GM12878 (cell line): ENCODE measurements at regions of chr20 and their contacts with region 1.

Region 1: DNA sequence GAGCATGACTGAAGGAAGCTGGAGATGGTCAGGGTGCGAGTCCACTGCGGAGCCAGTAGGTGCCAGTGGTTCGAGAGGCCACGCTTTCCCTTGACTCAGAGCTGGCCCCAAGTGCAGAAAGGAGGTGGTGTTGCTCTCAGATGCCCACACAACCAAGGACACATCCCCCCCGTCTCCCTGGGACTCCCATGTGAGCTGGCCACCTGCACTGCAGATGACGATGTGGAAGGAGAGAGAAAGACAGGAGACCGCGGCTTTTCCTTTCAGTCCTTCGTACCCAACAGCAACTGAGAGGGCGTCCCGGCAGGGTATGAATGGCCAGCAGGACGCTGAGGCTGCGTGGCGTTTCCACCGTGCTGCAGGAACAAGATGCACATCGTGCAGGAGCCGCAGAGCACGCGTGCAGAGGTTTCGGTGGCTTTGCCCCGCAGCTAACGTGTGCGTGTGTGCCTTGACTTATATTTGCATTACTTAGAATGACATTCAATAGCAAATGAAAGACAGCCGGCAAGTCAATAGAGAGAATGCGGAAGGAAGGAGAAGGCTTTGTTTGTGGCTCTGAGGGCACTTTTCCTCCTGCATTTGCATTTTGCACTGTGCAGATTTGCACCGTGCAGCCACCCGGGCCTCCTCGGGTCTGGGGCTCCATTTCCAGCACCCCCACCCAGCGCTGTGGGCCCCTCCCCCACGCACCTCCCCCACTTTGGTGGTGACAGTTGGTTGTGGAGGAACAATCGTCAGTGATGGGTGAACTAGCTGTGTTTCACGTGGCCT is 26.3 kb upstream of the BHLHE23 start:
- DNase-seq: peak; percentile 38
- ATAC-seq: peak; percentile 82
- H3K4me3 ChIP-seq: no peak overlapping the region
- H3K27ac ChIP-seq: no peak overlapping the region
- H3K4me1 ChIP-seq: 0 out of 2 replicates have a peak, but pooled peaks cover 3% of the 10 kb centered on the region
- H3K27me3 ChIP-seq: no peaks in the 10 kb centered on the region
- CTCF ChIP-seq: no peak
- EP300 ChIP-seq: no peak
- POLR2A ChIP-seq: peak; percentile 41; the same call in 1 of the 2 replicates
- RAD21 ChIP-seq: no peak

Region 2: GRCh38 chr20:62595491-62595890 is 437.6 kb before region 1 on chr20:
- CTCF ChIA-PET with region 1: no interaction called
- POLR2A ChIA-PET with region 1: no interaction called
- RAD21 ChIA-PET with region 1: no interaction called
- SMC1A ChIA-PET with region 1: no interaction called
- in situ Hi-C with region 1: no loop called
- intact Hi-C with region 1: no loop called
- DNase-seq: no peak
- ATAC-seq: no peak
- H3K4me3 ChIP-seq: no peak overlapping the region
- H3K27ac ChIP-seq: no peak overlapping the region
- H3K4me1 ChIP-seq: no peaks in the 10 kb centered on the region
- H3K27me3 ChIP-seq: peaks cover 5 to 11% of the 10 kb centered on the region in 2 experiments; a peak in 3 of 4 replicates
- CTCF ChIP-seq: no peak
- EP300 ChIP-seq: no peak
- POLR2A ChIP-seq: no peak
- RAD21 ChIP-seq: no peak

Region 3: DNA sequence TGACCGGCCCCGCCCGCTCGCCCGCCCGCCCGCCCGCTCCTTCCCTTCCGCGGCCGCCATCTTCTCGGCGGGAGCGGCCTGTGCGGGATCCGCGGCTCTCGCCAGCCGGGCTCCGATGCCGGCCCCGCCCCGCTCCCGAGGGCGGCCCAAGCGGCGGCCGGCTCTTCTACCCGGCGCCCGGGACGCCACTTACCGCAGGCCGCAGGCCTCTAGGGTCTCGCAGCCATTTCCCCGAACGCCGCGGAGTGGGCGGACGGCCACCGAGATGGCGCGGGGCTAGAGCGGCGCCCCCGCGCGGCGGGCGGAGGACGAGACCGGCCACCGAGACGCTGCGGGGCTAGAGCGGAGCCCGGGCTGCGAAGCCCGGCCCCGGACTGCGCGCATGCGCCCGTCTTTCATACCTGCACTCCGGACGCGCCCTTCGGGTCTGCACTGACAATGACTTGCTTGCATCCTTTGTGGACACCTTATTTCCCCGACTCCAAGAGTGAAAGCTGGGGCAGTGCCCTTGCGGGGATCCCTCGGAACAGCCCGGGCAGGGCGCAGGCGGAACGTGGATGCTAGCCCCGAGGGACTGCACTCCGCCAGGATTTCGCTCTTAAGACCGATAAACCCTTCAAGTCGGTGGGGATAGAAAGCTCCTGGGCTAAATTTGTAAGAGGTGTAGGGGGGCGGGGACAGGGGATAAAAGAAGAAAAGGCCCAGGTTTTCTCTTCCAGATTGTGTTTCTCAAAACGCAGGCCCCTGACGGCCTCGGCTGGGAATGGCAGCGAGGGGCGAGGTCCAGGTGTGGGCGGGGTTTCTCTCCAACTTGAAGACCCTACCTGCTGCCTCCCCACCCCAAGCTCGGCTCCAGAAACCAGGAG is 106.6 kb before region 1 on chr20 and contains the start of gene DIDO1:
- CTCF ChIA-PET with region 1: no interaction called
- POLR2A ChIA-PET with region 1: no interaction called
- RAD21 ChIA-PET with region 1: no interaction called
- SMC1A ChIA-PET with region 1: no interaction called
- in situ Hi-C with region 1: no loop called
- intact Hi-C with region 1: no loop called
- DNase-seq: peak; percentile 56
- ATAC-seq: peak; percentile 82
- H3K4me3 ChIP-seq: peak within 1 kb of the TSS; percentile 64
- H3K27ac ChIP-seq: peak within 1 kb of the TSS; percentile 96
- H3K4me1 ChIP-seq: peaks cover 19% of the 10 kb centered on the region
- H3K27me3 ChIP-seq: no peaks in the 10 kb centered on the region
- CTCF ChIP-seq: peak; percentile 34 to 59 (median 47); a peak in 5 of 6 replicates
- EP300 ChIP-seq: no peak
- POLR2A ChIP-seq: peak; percentile 80
- RAD21 ChIP-seq: no peak
- polyA plus RNA-seq, gene DIDO1: 5.5 to 7.8 TPM

Region 4: DNA sequence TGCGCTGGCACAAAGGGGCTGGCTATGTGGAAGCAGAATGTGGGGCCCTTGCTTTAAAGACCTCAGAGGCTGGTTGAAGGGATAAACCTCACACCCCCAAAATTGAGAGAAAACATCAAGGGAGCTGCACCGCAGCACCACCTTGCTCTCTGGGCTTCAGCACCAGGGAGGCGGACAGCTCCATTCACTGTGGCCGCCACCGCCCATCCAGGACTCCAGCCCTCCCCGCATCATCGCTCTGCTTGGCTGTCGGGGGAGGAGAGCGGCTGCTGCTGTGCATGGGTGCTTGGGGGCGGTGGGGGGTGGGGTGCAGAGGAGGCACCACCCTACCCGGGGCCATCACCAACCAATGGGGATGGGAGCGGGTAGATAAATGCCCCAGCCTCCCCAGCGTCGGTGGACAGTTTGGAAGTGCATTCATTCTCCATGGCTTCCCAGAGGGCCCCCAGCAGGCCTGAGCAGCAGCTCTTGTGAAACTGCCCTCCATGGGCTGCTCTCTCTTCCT is 49.3 kb after region 1 on chr20:
- CTCF ChIA-PET with region 1: no interaction called
- POLR2A ChIA-PET with region 1: no interaction called
- RAD21 ChIA-PET with region 1: no interaction called
- SMC1A ChIA-PET with region 1: no interaction called
- in situ Hi-C with region 1: no loop called
- intact Hi-C with region 1: loop called (anchors 1 kb)
- DNase-seq: no peak
- ATAC-seq: peak; percentile 63
- H3K4me3 ChIP-seq: no peak overlapping the region
- H3K27ac ChIP-seq: no peak overlapping the region
- H3K4me1 ChIP-seq: no peaks in the 10 kb centered on the region
- H3K27me3 ChIP-seq: no peaks in the 10 kb centered on the region; a peak in 2 of 4 replicates
- CTCF ChIP-seq: no peak
- EP300 ChIP-seq: no peak
- POLR2A ChIP-seq: no peak
- RAD21 ChIP-seq: no peak

Region 5: GRCh38 chr20:63151554-63152326 is 118.7 kb after region 1 on chr20:
- CTCF ChIA-PET with region 1: no interaction called
- POLR2A ChIA-PET with region 1: no interaction called
- RAD21 ChIA-PET with region 1: no interaction called
- SMC1A ChIA-PET with region 1: no interaction called
- in situ Hi-C with region 1: no loop called
- intact Hi-C with region 1: no loop called
- DNase-seq: no peak
- ATAC-seq: no peak
- H3K4me3 ChIP-seq: no peak overlapping the region
- H3K27ac ChIP-seq: no peak overlapping the region
- H3K4me1 ChIP-seq: no peaks in the 10 kb centered on the region
- H3K27me3 ChIP-seq: peaks cover 0 to 6% of the 10 kb centered on the region in 2 experiments; a peak in 2 of 4 replicates
- CTCF ChIP-seq: no peak
- EP300 ChIP-seq: no peak
- POLR2A ChIP-seq: no peak
- RAD21 ChIP-seq: no peak